ENCODE measurements at regions of chr13 and their contacts with region 1.

Region 1: GRCh38 chr13:40666905-40667621 is 622 bp upstream of the FOXO1 start:
- DNase-seq: peak in 1 of 2 experiments; percentile 67
- H3K4me3 ChIP-seq: peak overlapping the region; percentile 65 to 98 (median 75)
- H3K27ac ChIP-seq: no peak overlapping the region
- H3K4me1 ChIP-seq: peaks cover 4 to 18% (median 9%) of the 10 kb centered on the region in 4 experiments; a peak in 6 of 7 replicates
- H3K27me3 ChIP-seq: no peaks in the 10 kb centered on the region; a peak in 1 of 7 replicates
- CTCF ChIP-seq: no peak
- EP300 ChIP-seq: no peak
- POLR2A ChIP-seq: no peak
- RAD21 ChIP-seq: no peak

Region 2: GRCh38 chr13:40644838-40645604 is 22.0 kb before region 1 on chr13:
- CTCF ChIA-PET with region 1: interaction called, 18 read pairs
- POLR2A ChIA-PET with region 1: interaction called, 6 read pairs
- DNase-seq: no peak
- H3K4me3 ChIP-seq: no peak overlapping the region
- H3K27ac ChIP-seq: no peak overlapping the region
- H3K4me1 ChIP-seq: peaks cover 8 to 30% (median 23%) of the 10 kb centered on the region in 4 experiments
- H3K27me3 ChIP-seq: no peaks in the 10 kb centered on the region
- CTCF ChIP-seq: no peak
- EP300 ChIP-seq: no peak
- POLR2A ChIP-seq: no peak
- RAD21 ChIP-seq: no peak

Region 3: GRCh38 chr13:40682449-40683240 is 15.6 kb after region 1 on chr13:
- CTCF ChIA-PET with region 1: interaction called, 74 read pairs
- POLR2A ChIA-PET with region 1: interaction called, 8 read pairs
- DNase-seq: no peak
- H3K4me3 ChIP-seq: no peak overlapping the region
- H3K27ac ChIP-seq: no peak overlapping the region
- H3K4me1 ChIP-seq: peaks cover 12 to 15% (median 14%) of the 10 kb centered on the region in 4 experiments
- H3K27me3 ChIP-seq: no peaks in the 10 kb centered on the region
- CTCF ChIP-seq: peak in 1 of 3 experiments; percentile 28; a peak in 1 of 4 replicates
- EP300 ChIP-seq: no peak
- POLR2A ChIP-seq: no peak
- RAD21 ChIP-seq: peak in 1 of 2 experiments; percentile 47; a peak in 3 of 4 replicates

Measured in H1 (cell line).